Thyroid gland (tissue), 4 donors: ENCODE measurements at regions of chr2 and their contacts with region 1.

Region 1: DNA sequence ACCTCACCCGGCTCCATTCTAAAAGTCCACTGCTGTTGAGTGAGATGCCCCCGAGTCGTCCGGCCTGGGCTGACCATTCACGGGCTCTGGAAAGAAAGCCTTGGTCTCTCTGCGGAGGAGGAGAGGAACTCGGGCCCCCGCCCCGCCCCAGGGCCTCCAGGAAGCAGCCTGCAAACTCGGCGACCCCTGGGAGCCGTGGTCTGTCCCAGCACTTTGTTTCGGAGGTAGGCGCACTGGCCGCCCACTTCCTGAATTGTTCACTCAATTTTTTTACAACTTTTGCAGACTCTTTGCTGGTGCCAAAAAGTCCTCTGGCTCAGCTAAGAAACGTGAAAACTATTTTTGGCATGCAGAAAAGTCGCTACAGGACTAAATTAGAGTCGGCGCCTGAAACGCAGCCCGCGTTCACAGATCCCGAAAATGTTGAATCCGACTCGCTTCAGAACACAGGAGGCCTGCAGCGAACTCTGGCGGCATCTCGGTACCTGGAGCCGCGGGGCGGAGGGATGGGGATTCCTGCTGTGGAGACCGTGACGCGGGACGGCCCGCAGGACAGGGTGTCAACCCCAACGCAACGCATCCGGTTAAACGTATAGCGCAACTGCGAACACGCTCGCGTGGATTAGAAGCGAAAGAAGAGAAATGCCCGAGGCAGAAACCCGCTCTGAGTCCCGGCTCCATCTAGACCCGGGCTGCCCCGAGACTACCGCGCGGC is 1.5 kb downstream of the PXDN start:
- DNase-seq: peak; percentile 78 to 81
- H3K4me3 ChIP-seq: peak overlapping the region in 2 of 3 donors; percentile 9 to 77
- H3K27ac ChIP-seq: peak overlapping the region; percentile 75 to 94 (median 85)
- H3K4me1 ChIP-seq: peaks cover 3 to 24% of the 10 kb centered on the region in 2 donors
- H3K27me3 ChIP-seq: no peaks in the 10 kb centered on the region
- CTCF ChIP-seq: peak in 5 of 6 experiments; percentile 18 to 63 (median 56)
- POLR2A ChIP-seq: no peak

Region 2: DNA sequence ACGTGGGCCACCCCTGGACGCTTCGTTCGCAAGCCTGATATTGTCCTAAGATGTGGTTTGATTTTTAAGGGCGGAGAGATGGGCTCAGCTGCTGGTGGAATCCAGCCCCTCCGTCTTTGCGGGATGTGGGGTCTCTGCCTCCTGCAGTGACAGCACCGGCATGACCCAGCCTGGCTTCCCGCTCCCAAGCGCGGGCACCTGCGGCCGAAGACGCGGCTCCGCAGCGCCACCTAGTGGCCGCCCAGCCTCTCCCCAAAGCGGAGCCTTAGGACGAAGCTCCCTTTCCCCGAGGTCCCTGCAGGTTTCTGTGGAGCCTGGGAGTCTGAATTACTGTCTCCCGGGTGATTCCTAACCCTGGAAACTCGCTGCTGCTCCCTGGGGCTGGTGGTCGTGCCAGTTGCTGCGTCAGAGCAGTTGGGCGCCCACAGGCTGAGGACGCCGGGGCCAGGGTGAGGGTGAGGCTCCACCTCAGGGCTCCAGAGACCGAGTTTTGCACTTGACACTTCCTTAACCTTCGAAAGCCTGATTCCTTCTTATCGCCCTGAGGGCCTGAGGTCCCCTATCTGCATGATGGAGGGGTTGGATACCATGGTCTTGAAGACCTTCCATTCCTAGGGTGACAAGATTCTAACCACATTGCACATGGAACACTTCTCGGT is 192.1 kb before region 1 on chr2:
- intact Hi-C with region 1: loop called (anchors 5 kb)
- DNase-seq: peak; percentile 66 to 69
- H3K4me3 ChIP-seq: no peak overlapping the region
- H3K27ac ChIP-seq: no peak overlapping the region
- H3K4me1 ChIP-seq: peaks cover 0 to 6% of the 10 kb centered on the region in 2 donors
- H3K27me3 ChIP-seq: no peaks in the 10 kb centered on the region
- CTCF ChIP-seq: peak; percentile 78 to 97 (median 88)
- POLR2A ChIP-seq: no peak

Region 3: GRCh38 chr2:1591978-1592907 is 150.6 kb before region 1 on chr2:
- intact Hi-C with region 1: loop called (anchors 5 kb)
- DNase-seq: peak; percentile 62 to 63
- H3K4me3 ChIP-seq: no peak overlapping the region
- H3K27ac ChIP-seq: no peak overlapping the region
- H3K4me1 ChIP-seq: peaks cover 0 to 19% of the 10 kb centered on the region in 2 donors
- H3K27me3 ChIP-seq: no peaks in the 10 kb centered on the region
- CTCF ChIP-seq: peak in 5 of 6 experiments; percentile 18 to 83 (median 58)
- POLR2A ChIP-seq: no peak

Region 4: DNA sequence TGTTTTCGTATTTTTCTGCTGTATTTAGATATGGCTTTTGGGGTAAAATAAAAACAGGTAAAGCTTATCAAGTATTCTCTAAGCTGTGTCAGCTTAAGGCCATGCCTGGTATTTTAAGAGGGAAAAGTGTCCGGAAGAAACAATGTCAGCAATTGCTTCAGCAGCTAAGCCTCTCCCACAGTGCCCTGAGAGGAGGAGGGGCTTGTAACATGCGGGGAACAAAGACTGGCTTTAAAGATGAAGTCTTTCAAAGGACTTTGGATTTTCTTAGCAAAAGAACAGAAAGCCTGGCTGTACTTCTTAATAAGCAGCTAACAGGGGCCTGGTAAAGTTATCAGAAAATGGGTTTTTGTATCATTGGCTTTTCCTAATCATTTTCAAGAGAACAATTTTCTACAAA is 101.3 kb before region 1 on chr2:
- intact Hi-C with region 1: no loop called
- DNase-seq: peak; percentile 53 to 58
- H3K4me3 ChIP-seq: no peak overlapping the region
- H3K27ac ChIP-seq: peak overlapping the region in 2 of 3 donors; percentile 27 to 52
- H3K4me1 ChIP-seq: peaks cover 0 to 8% of the 10 kb centered on the region in 2 donors
- H3K27me3 ChIP-seq: no peaks in the 10 kb centered on the region
- CTCF ChIP-seq: no peak
- POLR2A ChIP-seq: no peak

Region 5: GRCh38 chr2:1707771-1708418 is 34.9 kb before region 1 on chr2:
- intact Hi-C with region 1: loop called (anchors 5 kb)
- DNase-seq: peak; percentile 28 to 42
- H3K4me3 ChIP-seq: no peak overlapping the region
- H3K27ac ChIP-seq: peak overlapping the region in 1 of 3 donors; percentile 32
- H3K4me1 ChIP-seq: peaks cover 4 to 40% of the 10 kb centered on the region in 2 donors
- H3K27me3 ChIP-seq: no peaks in the 10 kb centered on the region
- CTCF ChIP-seq: no peak
- POLR2A ChIP-seq: no peak

Region 6: GRCh38 chr2:2095360-2096093 is 352.7 kb after region 1 on chr2:
- intact Hi-C with region 1: no loop called
- DNase-seq: no peak
- H3K4me3 ChIP-seq: no peak overlapping the region
- H3K27ac ChIP-seq: no peak overlapping the region
- H3K4me1 ChIP-seq: peaks cover 3 to 6% of the 10 kb centered on the region in 2 donors
- H3K27me3 ChIP-seq: no peaks in the 10 kb centered on the region
- CTCF ChIP-seq: no peak
- POLR2A ChIP-seq: no peak